ENCODE measurements at regions of chr9 and their contacts with region 1.

Region 1: GRCh38 chr9:114718801-114719221 is 36.8 kb upstream of the TEX48 start:
- DNase-seq: peak; percentile 95
- ATAC-seq: peak; percentile 89
- H3K4me3 ChIP-seq: no peak overlapping the region
- H3K27ac ChIP-seq: peak overlapping the region; percentile 97
- H3K4me1 ChIP-seq: peaks cover 50% of the 10 kb centered on the region
- H3K27me3 ChIP-seq: no peaks in the 10 kb centered on the region
- CTCF ChIP-seq: peak; percentile 36; the same call in 1 of the 2 replicates

Region 2: DNA sequence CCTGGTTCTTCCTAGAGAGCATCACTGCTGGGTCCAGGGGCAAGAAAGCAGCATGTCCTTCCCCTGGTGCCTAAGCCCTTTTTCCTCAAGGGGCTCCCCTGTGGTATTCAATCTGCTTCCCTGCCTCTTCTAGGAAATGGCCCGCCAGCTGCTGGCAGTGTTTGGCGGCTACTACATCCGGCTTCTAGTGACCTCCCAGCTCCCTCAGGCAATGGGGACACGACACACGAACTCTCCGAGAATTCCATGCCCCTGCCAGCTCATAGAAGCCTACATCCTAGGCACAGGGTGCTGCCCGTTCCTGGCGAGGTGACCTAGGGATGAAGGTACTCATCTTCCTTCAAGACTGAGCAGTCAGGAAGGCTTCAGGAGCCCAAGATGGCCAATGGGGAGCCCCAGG is 75.8 kb before region 1 on chr9:
- CTCF ChIA-PET with region 1: no interaction called
- POLR2A ChIA-PET with region 1: no interaction called
- intact Hi-C with region 1: no loop called
- DNase-seq: no peak
- ATAC-seq: no peak
- H3K4me3 ChIP-seq: no peak overlapping the region
- H3K27ac ChIP-seq: no peak overlapping the region
- H3K4me1 ChIP-seq: no peaks in the 10 kb centered on the region
- H3K27me3 ChIP-seq: no peaks in the 10 kb centered on the region
- CTCF ChIP-seq: no peak

Region 3: GRCh38 chr9:114653556-114654159 is 65.2 kb before region 1 on chr9:
- CTCF ChIA-PET with region 1: no interaction called
- POLR2A ChIA-PET with region 1: no interaction called
- intact Hi-C with region 1: no loop called
- DNase-seq: peak; percentile 83
- ATAC-seq: peak; percentile 85
- H3K4me3 ChIP-seq: no peak overlapping the region
- H3K27ac ChIP-seq: no peak overlapping the region
- H3K4me1 ChIP-seq: no peaks in the 10 kb centered on the region
- H3K27me3 ChIP-seq: no peaks in the 10 kb centered on the region
- CTCF ChIP-seq: peak; percentile 89

Region 4: DNA sequence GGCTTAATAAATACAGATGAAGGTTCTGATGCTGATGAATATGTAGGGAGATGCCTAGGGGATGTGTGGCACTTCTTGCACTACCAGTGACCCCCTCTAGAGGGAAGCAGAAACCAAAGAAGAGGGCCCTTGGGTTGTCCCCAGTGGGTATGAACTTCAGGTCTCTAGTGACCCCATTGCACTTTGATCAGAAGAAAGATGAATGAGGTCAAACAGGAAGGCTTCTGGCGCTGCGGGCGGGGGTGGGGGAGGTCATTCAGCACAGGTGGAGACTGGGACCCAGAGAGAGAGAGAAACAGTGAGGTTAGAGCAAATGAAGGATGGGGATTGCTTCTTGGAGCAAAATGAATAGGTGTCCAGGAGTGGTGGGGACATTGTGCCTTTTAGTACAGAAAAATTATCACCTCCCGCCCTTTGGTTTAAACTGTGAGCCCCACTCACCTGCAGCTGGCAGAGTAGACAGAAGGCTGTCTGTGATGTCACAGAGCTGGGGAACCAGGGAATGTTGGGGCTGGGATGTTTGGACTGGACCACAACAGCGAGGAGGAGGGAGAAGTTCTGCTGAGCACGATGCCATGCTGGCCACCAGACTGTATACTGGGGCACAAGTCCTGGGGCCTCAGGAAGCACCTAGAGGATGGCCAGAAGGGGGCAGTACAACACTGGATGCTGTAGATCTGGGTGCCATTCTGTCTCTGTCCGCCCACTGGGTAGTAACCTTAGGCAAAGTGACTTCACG is 37.0 kb before region 1 on chr9 and contains the start of gene TEX48:
- CTCF ChIA-PET with region 1: no interaction called
- POLR2A ChIA-PET with region 1: no interaction called
- intact Hi-C with region 1: loop called (anchors 5 kb)
- DNase-seq: peak; percentile 82
- ATAC-seq: peak; percentile 75
- H3K4me3 ChIP-seq: no peak within 1 kb of the TSS
- H3K27ac ChIP-seq: peak within 1 kb of the TSS; percentile 71
- H3K4me1 ChIP-seq: peaks cover 40% of the 10 kb centered on the region
- H3K27me3 ChIP-seq: no peaks in the 10 kb centered on the region
- CTCF ChIP-seq: peak; percentile 65
- total RNA-seq, gene TEX48: 2.4 TPM in 1 of 2 replicates, not detected in the other

Region 5: DNA sequence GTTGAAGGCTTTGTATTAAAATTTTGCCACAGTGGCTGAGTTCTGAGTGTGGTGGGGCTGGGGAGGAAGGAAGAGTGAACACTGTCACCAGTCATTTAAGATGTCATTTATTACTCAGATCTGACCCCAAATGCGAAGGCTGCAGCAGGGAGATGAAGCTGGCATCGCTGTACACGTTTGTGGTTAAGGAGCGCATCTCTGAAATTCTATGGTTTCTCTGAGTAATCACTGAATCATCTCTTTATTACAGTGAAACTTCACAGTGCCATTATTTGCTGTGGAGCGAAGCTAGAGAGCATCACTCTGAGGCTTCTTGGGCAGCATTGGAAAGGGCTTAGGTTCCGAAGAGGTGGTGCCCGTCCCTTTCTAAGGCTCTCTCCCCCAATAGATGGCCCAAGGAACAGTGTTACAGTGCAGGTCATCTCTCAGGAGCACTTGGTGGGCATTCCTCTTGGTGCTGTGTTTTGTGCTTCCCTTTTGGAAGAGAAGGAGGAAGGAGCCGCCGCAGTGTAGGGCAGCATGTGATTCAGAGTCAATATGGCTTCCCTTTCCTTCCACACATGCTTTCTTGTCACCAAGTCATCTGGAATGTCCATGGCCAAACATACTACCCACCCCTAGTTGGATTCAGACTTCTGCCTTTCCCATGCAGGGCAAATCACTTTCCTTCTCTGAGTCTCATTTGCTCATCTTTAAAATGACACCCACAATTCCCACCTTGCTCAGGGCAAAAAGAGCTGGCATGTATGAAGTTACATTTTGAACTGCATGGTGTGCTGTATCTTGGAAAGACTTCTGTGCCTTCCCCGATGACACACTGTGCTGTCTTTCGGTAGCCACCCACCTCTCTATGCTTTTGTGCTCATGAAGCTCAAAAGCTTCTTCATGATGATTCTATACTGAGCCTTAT is 27.5 kb before region 1 on chr9:
- CTCF ChIA-PET with region 1: interaction called, 4 read pairs
- POLR2A ChIA-PET with region 1: no interaction called
- intact Hi-C with region 1: loop called (anchors 1 kb)
- DNase-seq: peak; percentile 96
- ATAC-seq: peak; percentile 75
- H3K4me3 ChIP-seq: no peak overlapping the region
- H3K27ac ChIP-seq: peak overlapping the region; percentile 98
- H3K4me1 ChIP-seq: peaks cover 68% of the 10 kb centered on the region
- H3K27me3 ChIP-seq: no peaks in the 10 kb centered on the region
- CTCF ChIP-seq: no peak

Region 6: GRCh38 chr9:114732842-114733241 is 14.0 kb after region 1 on chr9:
- CTCF ChIA-PET with region 1: no interaction called
- POLR2A ChIA-PET with region 1: interaction called, 10 read pairs
- intact Hi-C with region 1: loop called (anchors 2 kb)
- DNase-seq: peak; percentile 76
- ATAC-seq: peak; percentile 57
- H3K4me3 ChIP-seq: no peak overlapping the region
- H3K27ac ChIP-seq: peak overlapping the region; percentile 90
- H3K4me1 ChIP-seq: peaks cover 49% of the 10 kb centered on the region
- H3K27me3 ChIP-seq: no peaks in the 10 kb centered on the region
- CTCF ChIP-seq: no peak

Region 7: GRCh38 chr9:114738581-114739316 is 19.9 kb after region 1 on chr9:
- CTCF ChIA-PET with region 1: no interaction called
- POLR2A ChIA-PET with region 1: no interaction called
- intact Hi-C with region 1: loop called (anchors 2 kb)
- DNase-seq: peak; percentile 80
- ATAC-seq: peak; percentile 52
- H3K4me3 ChIP-seq: no peak overlapping the region
- H3K27ac ChIP-seq: peak overlapping the region; percentile 63
- H3K4me1 ChIP-seq: peaks cover 33% of the 10 kb centered on the region
- H3K27me3 ChIP-seq: no peaks in the 10 kb centered on the region
- CTCF ChIP-seq: peak; percentile 87

Region 8: GRCh38 chr9:115328228-115328627 is 609.4 kb after region 1 on chr9:
- CTCF ChIA-PET with region 1: no interaction called
- POLR2A ChIA-PET with region 1: no interaction called
- intact Hi-C with region 1: no loop called
- DNase-seq: no peak
- ATAC-seq: no peak
- H3K4me3 ChIP-seq: no peak overlapping the region
- H3K27ac ChIP-seq: no peak overlapping the region
- H3K4me1 ChIP-seq: peaks cover under 1% of the 10 kb centered on the region; the same call in 1 of the 2 replicates
- H3K27me3 ChIP-seq: no peaks in the 10 kb centered on the region
- CTCF ChIP-seq: no peak